Activated CD4-positive, alpha-beta memory T cell treated with anti-CD3 and anti-CD28 coated beads for 36 hours (primary cell): ENCODE measurements at regions of chr6 and their contacts with region 1.

Region 1: DNA sequence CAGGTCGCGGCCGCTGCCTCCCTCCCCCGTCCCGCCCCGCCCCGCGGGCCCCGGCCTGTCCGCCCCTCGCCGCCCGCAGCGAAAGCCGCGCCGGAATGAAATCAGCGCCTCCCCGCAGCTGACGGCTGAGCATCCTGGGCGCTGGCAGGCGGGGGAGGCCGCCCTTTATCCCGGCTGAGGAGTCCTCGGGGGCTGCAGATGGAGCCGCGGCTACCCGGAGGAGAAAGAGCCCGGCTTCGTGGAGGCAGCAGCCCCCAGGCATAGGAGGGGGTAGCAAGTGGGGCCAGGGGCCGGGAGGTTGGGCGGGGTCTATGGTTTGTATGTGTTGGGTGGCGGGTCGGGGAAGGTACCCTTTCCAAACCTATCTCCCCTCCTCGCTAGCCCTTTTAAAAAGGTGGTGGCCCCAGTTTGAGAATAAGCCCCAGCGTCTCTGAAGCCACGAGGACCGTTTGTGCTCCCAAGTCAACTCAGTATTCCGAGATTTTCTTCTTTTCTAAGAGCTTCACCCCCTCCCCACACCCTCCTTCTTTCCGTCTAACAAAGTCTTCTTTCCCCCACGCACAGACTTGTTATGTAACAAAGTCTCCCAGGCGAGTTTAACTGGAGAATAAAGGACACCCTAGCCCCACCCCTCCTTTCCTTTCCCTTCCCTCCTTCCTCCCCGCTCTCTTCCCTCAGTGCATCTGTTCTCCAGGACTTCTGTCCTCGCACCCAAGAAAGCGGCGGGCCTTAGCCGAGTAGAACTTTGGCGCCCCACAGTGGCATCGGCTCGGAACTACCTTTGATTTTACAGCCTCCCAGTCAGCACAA is 11.0 kb downstream of the POU3F2 start:
- DNase-seq: peak; percentile 80
- H3K4me3 Mint-ChIP-seq: peak overlapping the region; percentile 31
- H3K27ac Mint-ChIP-seq: no peak overlapping the region
- H3K4me1 Mint-ChIP-seq: peaks cover 25% of the 10 kb centered on the region
- H3K27me3 Mint-ChIP-seq: peaks cover 74% of the 10 kb centered on the region

Region 2: DNA sequence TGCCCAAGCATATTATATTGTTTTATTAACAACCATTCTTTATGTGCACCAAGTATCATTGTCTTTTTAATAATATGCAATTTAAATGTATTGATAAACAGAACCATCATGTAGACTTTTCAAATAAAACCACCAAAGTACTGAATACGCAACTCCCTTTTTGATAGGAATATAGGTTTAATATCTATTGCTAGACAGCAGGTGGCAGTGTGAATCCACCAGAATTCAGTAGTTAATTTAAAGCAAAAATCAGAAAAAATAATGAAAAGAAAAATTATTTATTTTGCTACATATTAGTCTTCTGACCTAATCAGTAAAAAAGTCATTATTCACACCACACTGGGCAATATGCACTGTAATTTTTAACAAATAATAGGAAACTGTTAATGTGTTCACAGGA is 1777.2 kb before region 1 on chr6:
- CTCF ChIA-PET with region 1: no interaction called
- POLR2A ChIA-PET with region 1: no interaction called
- intact Hi-C with region 1: loop called (anchors 2 kb)
- DNase-seq: no peak
- H3K4me3 Mint-ChIP-seq: no peak overlapping the region
- H3K27ac Mint-ChIP-seq: no peak overlapping the region
- H3K4me1 Mint-ChIP-seq: no peaks in the 10 kb centered on the region
- H3K27me3 Mint-ChIP-seq: no peaks in the 10 kb centered on the region

Region 3: DNA sequence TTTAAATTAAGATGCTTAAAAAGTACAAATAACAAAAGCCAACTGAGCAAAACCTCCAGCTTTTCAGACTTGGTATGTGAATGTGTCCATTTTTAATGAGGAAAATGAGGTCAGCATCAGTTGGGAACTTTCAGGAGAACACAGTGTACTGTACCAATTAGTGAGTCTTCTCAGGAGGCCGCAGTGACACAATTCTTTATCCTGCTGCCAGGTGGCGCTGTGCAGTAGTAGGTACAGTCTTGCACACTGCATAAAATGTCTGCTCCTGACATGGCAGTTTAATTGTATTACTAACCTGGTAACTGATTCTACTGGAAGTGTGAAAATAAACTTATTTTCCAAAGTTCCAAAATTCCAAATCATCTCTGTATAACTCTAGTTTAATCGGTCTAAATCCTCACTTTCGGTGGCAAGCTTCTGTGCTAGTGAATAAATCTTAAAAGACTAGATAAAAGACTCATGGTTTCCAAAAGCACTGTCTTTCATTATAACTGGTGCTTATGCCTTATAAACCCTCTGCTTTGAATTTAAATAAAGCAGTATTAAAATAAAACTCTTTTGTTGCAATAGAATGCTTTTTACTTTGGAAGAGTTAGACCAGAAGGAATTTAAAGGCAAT is 1347.6 kb before region 1 on chr6:
- CTCF ChIA-PET with region 1: interaction called, 8 read pairs
- POLR2A ChIA-PET with region 1: no interaction called
- intact Hi-C with region 1: loop called (anchors 1 kb)
- DNase-seq: peak; percentile 70
- H3K4me3 Mint-ChIP-seq: no peak overlapping the region
- H3K27ac Mint-ChIP-seq: no peak overlapping the region
- H3K4me1 Mint-ChIP-seq: no peaks in the 10 kb centered on the region
- H3K27me3 Mint-ChIP-seq: peaks cover 12% of the 10 kb centered on the region

Region 4: DNA sequence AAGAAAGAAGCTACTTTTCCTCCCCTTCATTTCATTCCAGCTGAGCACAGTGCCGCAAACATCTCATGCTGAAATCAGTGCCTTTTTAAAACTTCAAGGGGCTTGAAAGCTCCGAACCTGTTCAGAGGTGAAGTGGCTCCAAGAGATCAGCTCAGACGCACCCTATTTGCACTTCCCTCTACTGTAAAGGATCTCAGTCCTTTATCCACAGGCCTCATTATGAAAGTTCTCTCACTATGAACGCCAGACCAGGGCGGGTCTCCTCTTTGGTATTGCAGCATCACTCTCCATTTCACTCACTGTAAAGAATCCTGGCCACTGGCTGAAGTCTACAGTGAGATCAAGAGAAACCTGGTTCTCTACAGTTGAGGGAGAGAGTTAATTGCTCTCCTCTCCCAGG is 243.7 kb before region 1 on chr6:
- CTCF ChIA-PET with region 1: no interaction called
- POLR2A ChIA-PET with region 1: no interaction called
- intact Hi-C with region 1: no loop called
- DNase-seq: no peak
- H3K4me3 Mint-ChIP-seq: no peak overlapping the region
- H3K27ac Mint-ChIP-seq: no peak overlapping the region
- H3K4me1 Mint-ChIP-seq: no peaks in the 10 kb centered on the region
- H3K27me3 Mint-ChIP-seq: no peaks in the 10 kb centered on the region

Region 5: GRCh38 chr6:98747960-98748359 is 97.5 kb before region 1 on chr6:
- CTCF ChIA-PET with region 1: no interaction called
- POLR2A ChIA-PET with region 1: no interaction called
- intact Hi-C with region 1: no loop called
- DNase-seq: no peak
- H3K4me3 Mint-ChIP-seq: no peak overlapping the region
- H3K27ac Mint-ChIP-seq: no peak overlapping the region
- H3K4me1 Mint-ChIP-seq: no peaks in the 10 kb centered on the region
- H3K27me3 Mint-ChIP-seq: no peaks in the 10 kb centered on the region

Region 6: DNA sequence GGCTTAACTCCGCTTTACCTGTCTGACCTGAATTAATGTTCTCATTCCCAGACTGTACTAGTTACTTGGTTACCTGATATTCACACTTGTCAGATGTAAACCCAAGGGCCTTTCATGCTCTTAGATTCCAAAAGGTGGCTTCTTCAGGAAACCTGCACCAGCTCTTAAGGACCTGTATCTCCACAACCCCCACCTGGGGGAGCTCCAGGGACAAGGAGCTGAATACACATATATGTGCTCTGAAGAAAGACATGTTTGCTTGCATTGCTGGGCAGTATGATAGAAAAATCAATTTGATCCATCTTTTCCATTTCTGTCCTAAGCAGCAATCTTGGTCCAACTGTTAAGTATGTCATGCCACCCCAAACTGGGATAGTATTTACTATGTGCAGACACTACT is 75.9 kb before region 1 on chr6:
- CTCF ChIA-PET with region 1: no interaction called
- POLR2A ChIA-PET with region 1: no interaction called
- intact Hi-C with region 1: loop called (anchors 1 kb)
- DNase-seq: peak; percentile 20
- H3K4me3 Mint-ChIP-seq: no peak overlapping the region
- H3K27ac Mint-ChIP-seq: no peak overlapping the region
- H3K4me1 Mint-ChIP-seq: no peaks in the 10 kb centered on the region
- H3K27me3 Mint-ChIP-seq: peaks cover 15% of the 10 kb centered on the region

Region 7: GRCh38 chr6:98827295-98828159 is 17.9 kb before region 1 on chr6:
- CTCF ChIA-PET with region 1: interaction called, 8 read pairs
- POLR2A ChIA-PET with region 1: no interaction called
- intact Hi-C with region 1: loop called (anchors 2 kb)
- DNase-seq: no peak
- H3K4me3 Mint-ChIP-seq: no peak overlapping the region
- H3K27ac Mint-ChIP-seq: no peak overlapping the region
- H3K4me1 Mint-ChIP-seq: peaks cover 47% of the 10 kb centered on the region
- H3K27me3 Mint-ChIP-seq: peaks cover 74% of the 10 kb centered on the region

Region 8: GRCh38 chr6:98834060-98835031 is 11.1 kb before region 1 on chr6 and contains the start of gene POU3F2:
- CTCF ChIA-PET with region 1: interaction called, 8 read pairs
- POLR2A ChIA-PET with region 1: no interaction called
- intact Hi-C with region 1: loop called (anchors 1 kb)
- DNase-seq: peak; percentile 81
- H3K4me3 Mint-ChIP-seq: peak within 1 kb of the TSS; percentile 65
- H3K27ac Mint-ChIP-seq: no peak within 1 kb of the TSS
- H3K4me1 Mint-ChIP-seq: peaks cover 38% of the 10 kb centered on the region
- H3K27me3 Mint-ChIP-seq: peaks cover 68% of the 10 kb centered on the region
- total RNA-seq, gene POU3F2: not detected

Region 9: GRCh38 chr6:98977671-98978292 is 132.4 kb after region 1 on chr6:
- CTCF ChIA-PET with region 1: no interaction called
- POLR2A ChIA-PET with region 1: no interaction called
- intact Hi-C with region 1: no loop called
- DNase-seq: no peak
- H3K4me3 Mint-ChIP-seq: no peak overlapping the region
- H3K27ac Mint-ChIP-seq: no peak overlapping the region
- H3K4me1 Mint-ChIP-seq: peaks cover 8% of the 10 kb centered on the region
- H3K27me3 Mint-ChIP-seq: no peaks in the 10 kb centered on the region

Region 10: GRCh38 chr6:99119109-99120031 is 274.0 kb after region 1 on chr6:
- CTCF ChIA-PET with region 1: no interaction called
- POLR2A ChIA-PET with region 1: no interaction called
- intact Hi-C with region 1: loop called (anchors 2 kb)
- DNase-seq: no peak
- H3K4me3 Mint-ChIP-seq: no peak overlapping the region
- H3K27ac Mint-ChIP-seq: no peak overlapping the region
- H3K4me1 Mint-ChIP-seq: peaks cover 3% of the 10 kb centered on the region
- H3K27me3 Mint-ChIP-seq: peaks cover 28% of the 10 kb centered on the region